ENCODE measurements at regions of chr15 and their contacts with region 1.

Region 1: GRCh38 chr15:38699633-38700230 is 135.1 kb upstream of the RASGRP1 start:
- DNase-seq: peak; percentile 53 to 88 (median 62)
- ATAC-seq: peak; percentile 59
- H3K4me3 ChIP-seq: no peak overlapping the region
- H3K4me3 Mint-ChIP-seq: peak overlapping the region; percentile 2
- H3K27ac ChIP-seq: peak overlapping the region in 1 of 2 donors; percentile 7
- H3K27ac Mint-ChIP-seq: peak overlapping the region; percentile 55
- H3K4me1 ChIP-seq: peaks cover 50% of the 10 kb centered on the region
- H3K4me1 Mint-ChIP-seq: peaks cover 50% of the 10 kb centered on the region
- H3K27me3 ChIP-seq: no peaks in the 10 kb centered on the region
- H3K27me3 Mint-ChIP-seq: no peaks in the 10 kb centered on the region
- CTCF ChIP-seq: peak; percentile 96

Region 2: GRCh38 chr15:38252481-38253412 is 447.0 kb before region 1 on chr15 and contains the start of gene SPRED1:
- CTCF ChIA-PET with region 1: no interaction called
- POLR2A ChIA-PET with region 1: no interaction called
- intact Hi-C with region 1: loop called in 1 of 2 experiments (anchors 10 kb)
- DNase-seq: peak in 8 of 14 experiments; percentile 0 to 34 (median 5)
- ATAC-seq: peak; percentile 6
- H3K4me3 ChIP-seq: peak within 1 kb of the TSS; percentile 75
- H3K4me3 Mint-ChIP-seq: peak within 1 kb of the TSS; percentile 88
- H3K27ac ChIP-seq: no peak within 1 kb of the TSS
- H3K27ac Mint-ChIP-seq: peak within 1 kb of the TSS; percentile 57
- H3K4me1 ChIP-seq: peaks cover 24% of the 10 kb centered on the region
- H3K4me1 Mint-ChIP-seq: peaks cover 36% of the 10 kb centered on the region
- H3K27me3 ChIP-seq: peaks cover 8 to 17% of the 10 kb centered on the region in 2 experiments
- H3K27me3 Mint-ChIP-seq: peaks cover 39% of the 10 kb centered on the region
- CTCF ChIP-seq: no peak
- total RNA-seq, gene SPRED1: 0.03 to 0.05 TPM

Region 3: GRCh38 chr15:38453971-38454695 is 245.6 kb before region 1 on chr15 and contains the start of gene FAM98B:
- CTCF ChIA-PET with region 1: interaction called, 14 read pairs
- POLR2A ChIA-PET with region 1: interaction called, 20 read pairs
- intact Hi-C with region 1: no loop called
- DNase-seq: peak; percentile 72 to 90 (median 84)
- ATAC-seq: peak; percentile 90
- H3K4me3 ChIP-seq: peak within 1 kb of the TSS; percentile 80
- H3K4me3 Mint-ChIP-seq: peak within 1 kb of the TSS; percentile 94
- H3K27ac ChIP-seq: peak within 1 kb of the TSS; percentile 75 to 77
- H3K27ac Mint-ChIP-seq: peak within 1 kb of the TSS; percentile 95
- H3K4me1 ChIP-seq: peaks cover 14% of the 10 kb centered on the region
- H3K4me1 Mint-ChIP-seq: peaks cover 40% of the 10 kb centered on the region
- H3K27me3 ChIP-seq: no peaks in the 10 kb centered on the region
- H3K27me3 Mint-ChIP-seq: no peaks in the 10 kb centered on the region
- CTCF ChIP-seq: no peak
- total RNA-seq, gene FAM98B: 20.1 to 20.4 TPM

Region 4: GRCh38 chr15:38479266-38479665 is 220.5 kb before region 1 on chr15:
- CTCF ChIA-PET with region 1: interaction called, 38 read pairs
- POLR2A ChIA-PET with region 1: interaction called, 18 read pairs
- intact Hi-C with region 1: loop called (anchors 1 kb)
- DNase-seq: no peak
- ATAC-seq: no peak
- H3K4me3 ChIP-seq: no peak overlapping the region
- H3K4me3 Mint-ChIP-seq: no peak overlapping the region
- H3K27ac ChIP-seq: no peak overlapping the region
- H3K27ac Mint-ChIP-seq: peak overlapping the region; percentile 0
- H3K4me1 ChIP-seq: no peaks in the 10 kb centered on the region
- H3K4me1 Mint-ChIP-seq: peaks cover 31% of the 10 kb centered on the region
- H3K27me3 ChIP-seq: no peaks in the 10 kb centered on the region
- H3K27me3 Mint-ChIP-seq: no peaks in the 10 kb centered on the region
- CTCF ChIP-seq: no peak

Region 5: GRCh38 chr15:38521316-38521715 is 178.4 kb before region 1 on chr15:
- CTCF ChIA-PET with region 1: interaction called, 15 read pairs
- POLR2A ChIA-PET with region 1: no interaction called
- intact Hi-C with region 1: no loop called
- DNase-seq: no peak
- ATAC-seq: no peak
- H3K4me3 ChIP-seq: no peak overlapping the region
- H3K4me3 Mint-ChIP-seq: no peak overlapping the region
- H3K27ac ChIP-seq: no peak overlapping the region
- H3K27ac Mint-ChIP-seq: peak overlapping the region; percentile 69
- H3K4me1 ChIP-seq: peaks cover 7% of the 10 kb centered on the region
- H3K4me1 Mint-ChIP-seq: peaks cover 49% of the 10 kb centered on the region
- H3K27me3 ChIP-seq: no peaks in the 10 kb centered on the region
- H3K27me3 Mint-ChIP-seq: no peaks in the 10 kb centered on the region
- CTCF ChIP-seq: no peak

Region 6: GRCh38 chr15:38647683-38648082 is 52.0 kb before region 1 on chr15:
- CTCF ChIA-PET with region 1: interaction called, 10 read pairs
- POLR2A ChIA-PET with region 1: interaction called, 9 read pairs
- intact Hi-C with region 1: no loop called
- DNase-seq: no peak
- ATAC-seq: no peak
- H3K4me3 ChIP-seq: no peak overlapping the region
- H3K4me3 Mint-ChIP-seq: peak overlapping the region; percentile 4
- H3K27ac ChIP-seq: peak overlapping the region in 1 of 2 donors; percentile 20
- H3K27ac Mint-ChIP-seq: peak overlapping the region; percentile 93
- H3K4me1 ChIP-seq: peaks cover 62% of the 10 kb centered on the region
- H3K4me1 Mint-ChIP-seq: peaks cover 81% of the 10 kb centered on the region
- H3K27me3 ChIP-seq: no peaks in the 10 kb centered on the region
- H3K27me3 Mint-ChIP-seq: no peaks in the 10 kb centered on the region
- CTCF ChIP-seq: no peak

Region 7: DNA sequence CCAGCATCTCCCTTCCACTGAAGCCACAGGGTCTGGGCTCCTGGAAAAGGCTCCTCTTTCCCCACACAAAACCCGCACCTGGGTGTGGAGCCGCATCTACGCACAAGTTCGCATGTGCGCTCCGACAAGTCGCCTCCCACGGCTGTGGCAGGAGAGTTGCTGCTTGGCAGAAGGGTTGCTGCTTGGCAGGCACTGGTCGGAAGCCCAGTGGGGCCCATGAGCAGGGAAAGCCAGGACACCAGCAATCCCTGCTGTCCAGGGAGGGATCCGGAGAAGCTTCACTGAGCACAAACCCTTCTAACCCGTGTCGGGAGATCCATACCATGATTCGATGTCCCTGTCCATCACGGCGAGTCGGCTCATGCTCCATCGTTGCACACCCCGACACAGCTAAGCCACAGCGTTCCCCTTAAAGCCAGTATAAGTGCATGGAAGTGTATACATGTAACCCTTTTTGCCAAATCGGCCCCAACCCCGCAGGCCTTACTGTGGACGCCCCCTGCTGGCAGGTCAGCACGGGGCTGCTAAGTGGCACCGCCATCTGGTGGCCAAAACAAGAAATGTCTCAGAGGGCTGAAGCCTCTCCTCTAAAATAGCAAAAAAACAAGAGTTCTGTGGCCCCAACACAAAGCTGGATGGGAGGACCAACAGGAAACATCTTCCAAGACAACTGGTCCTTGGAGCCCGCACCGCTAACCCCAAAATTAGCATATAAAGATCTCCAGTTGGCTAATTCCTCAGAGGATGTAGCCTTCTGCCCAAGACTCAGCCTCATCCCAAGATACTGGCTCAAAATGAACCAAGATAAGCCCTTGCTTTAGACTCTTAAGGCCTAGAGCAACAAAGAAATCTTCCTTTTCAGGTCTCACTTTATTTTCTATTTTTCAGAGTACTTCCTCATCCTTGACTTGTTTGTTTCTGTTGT is 1574.9 kb after region 1 on chr15:
- CTCF ChIA-PET with region 1: no interaction called
- POLR2A ChIA-PET with region 1: no interaction called
- intact Hi-C with region 1: loop called in 1 of 2 experiments (anchors 10 kb)
- DNase-seq: peak; percentile 78 to 94 (median 86)
- ATAC-seq: peak; percentile 89
- H3K4me3 ChIP-seq: no peak overlapping the region
- H3K4me3 Mint-ChIP-seq: no peak overlapping the region
- H3K27ac ChIP-seq: no peak overlapping the region
- H3K27ac Mint-ChIP-seq: no peak overlapping the region
- H3K4me1 ChIP-seq: peaks cover 12% of the 10 kb centered on the region
- H3K4me1 Mint-ChIP-seq: peaks cover 12% of the 10 kb centered on the region
- H3K27me3 ChIP-seq: peaks cover 18 to 19% of the 10 kb centered on the region in 2 experiments
- H3K27me3 Mint-ChIP-seq: peaks cover 23% of the 10 kb centered on the region
- CTCF ChIP-seq: peak; percentile 100

Measured in CD4-positive, alpha-beta T cell (primary cell).